Activated CD8-positive, alpha-beta T cell treated with anti-CD3 and anti-CD28 coated beads, Interleukin-2, amount 10 ng/mL, durations not matched to agents 7 days and 5 days (primary cell): ENCODE measurements at regions of chr19 and their contacts with region 1.

Region 1: DNA sequence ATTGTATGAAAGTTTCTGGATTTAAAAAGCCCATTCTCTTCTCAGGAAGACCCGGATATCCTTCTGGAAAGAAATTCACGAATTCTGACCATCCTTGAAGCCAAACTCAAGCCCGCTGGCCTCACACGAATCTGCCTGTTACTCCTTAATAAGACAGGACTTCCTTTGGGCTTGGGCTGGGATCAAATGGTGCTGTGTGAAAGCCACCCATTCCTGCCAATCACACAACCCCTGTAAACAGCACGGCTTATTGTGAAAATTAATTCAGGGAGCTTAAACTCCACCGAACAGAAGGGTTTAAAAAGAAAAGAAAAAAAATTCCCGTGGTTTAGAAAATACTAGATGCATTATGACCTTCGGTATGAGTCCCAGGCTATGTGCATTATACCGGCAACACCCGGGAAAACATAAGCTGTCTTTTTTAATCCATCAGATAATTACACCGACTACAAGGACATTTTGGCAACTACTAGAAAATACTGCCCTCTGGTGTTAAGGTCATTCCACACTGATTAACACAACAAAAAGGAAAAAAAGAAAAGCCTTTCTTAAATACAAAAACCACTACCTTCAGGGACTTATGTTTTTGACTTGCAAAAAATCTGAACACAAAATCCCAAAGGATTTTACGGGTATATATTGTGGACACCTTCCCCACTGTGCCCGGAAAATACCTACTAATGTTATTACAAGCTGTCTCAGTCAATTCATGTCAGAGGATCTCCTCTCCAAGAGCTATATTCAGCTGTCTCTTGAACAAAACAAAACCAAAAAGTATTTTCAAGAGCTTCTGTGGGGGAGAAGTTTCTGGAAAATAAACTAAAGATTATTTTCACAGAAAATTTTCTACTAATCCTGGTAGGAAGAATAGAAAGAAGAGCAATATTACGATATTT is 76.0 kb upstream of the LSM14A start:
- DNase-seq: no peak
- ATAC-seq: no peak
- H3K4me3 Mint-ChIP-seq: no peak overlapping the region
- H3K27ac Mint-ChIP-seq: no peak overlapping the region
- H3K4me1 Mint-ChIP-seq: no peaks in the 10 kb centered on the region
- H3K27me3 Mint-ChIP-seq: peaks cover 18% of the 10 kb centered on the region

Region 2: DNA sequence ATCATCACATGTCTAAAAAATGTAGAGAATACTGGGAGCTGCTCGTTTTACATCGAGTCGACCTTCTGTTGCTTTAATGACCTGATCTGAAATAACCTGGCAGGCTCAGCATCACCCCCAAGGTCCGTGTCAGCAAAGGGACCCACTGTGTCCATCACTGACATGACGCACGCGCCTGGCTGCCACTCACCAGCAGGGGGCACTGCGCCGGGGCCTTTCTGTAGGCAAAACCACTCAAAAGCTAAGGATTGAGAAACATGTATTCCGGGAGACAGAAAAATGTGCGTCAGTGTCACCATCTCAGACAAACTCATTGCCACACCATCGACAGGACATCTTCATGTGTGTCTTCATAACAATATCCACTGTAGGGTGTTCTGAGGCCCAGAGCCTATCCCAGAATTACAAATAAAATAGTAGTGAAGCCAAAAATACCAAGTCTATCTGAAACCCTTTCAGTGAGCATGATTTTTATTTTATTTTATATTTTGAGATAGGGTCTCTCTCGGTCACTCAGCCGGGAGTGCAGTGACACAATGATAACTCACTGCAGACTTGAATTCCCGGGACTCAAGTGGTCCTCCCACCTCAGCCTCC is 54.2 kb before region 1 on chr19:
- CTCF ChIA-PET with region 1: interaction called, 14 read pairs
- POLR2A ChIA-PET with region 1: no interaction called
- DNase-seq: peak; percentile 75
- ATAC-seq: no peak
- H3K4me3 Mint-ChIP-seq: no peak overlapping the region
- H3K27ac Mint-ChIP-seq: no peak overlapping the region
- H3K4me1 Mint-ChIP-seq: no peaks in the 10 kb centered on the region
- H3K27me3 Mint-ChIP-seq: no peaks in the 10 kb centered on the region

Region 3: GRCh38 chr19:34165295-34165738 is 69.0 kb after region 1 on chr19:
- CTCF ChIA-PET with region 1: no interaction called
- POLR2A ChIA-PET with region 1: no interaction called
- DNase-seq: no peak
- ATAC-seq: no peak
- H3K4me3 Mint-ChIP-seq: no peak overlapping the region
- H3K27ac Mint-ChIP-seq: no peak overlapping the region
- H3K4me1 Mint-ChIP-seq: no peaks in the 10 kb centered on the region
- H3K27me3 Mint-ChIP-seq: peaks cover 2% of the 10 kb centered on the region